ENCODE measurements at regions of chr10 and their contacts with region 1.

Region 1: DNA sequence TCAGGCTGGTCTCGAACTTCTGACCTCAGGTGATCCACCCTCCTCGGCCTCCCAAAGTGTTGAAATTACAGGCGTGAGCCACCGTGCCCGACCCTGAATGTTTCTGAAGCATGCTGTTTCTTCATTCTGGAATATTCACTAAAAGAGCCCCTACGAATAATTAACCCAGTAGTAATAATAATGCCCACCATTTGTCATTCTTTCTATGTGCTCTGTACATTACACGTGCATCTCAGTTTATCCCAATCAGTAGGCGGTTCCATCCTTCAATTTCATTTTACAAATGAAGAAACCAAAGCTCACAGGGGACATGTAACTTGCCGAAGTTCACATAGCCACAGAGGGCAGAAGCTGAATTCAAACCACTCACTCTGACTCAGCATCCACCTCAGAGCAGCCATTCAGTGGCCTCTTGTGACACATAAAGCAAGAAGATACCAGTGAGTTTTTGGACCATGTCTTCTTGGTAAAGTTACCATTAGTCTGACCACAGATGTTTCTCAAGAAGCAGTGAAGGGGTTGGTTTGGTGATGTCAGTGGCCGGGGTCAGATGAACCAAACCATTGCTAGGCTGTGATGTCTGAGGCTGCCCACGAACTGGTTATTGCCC is 71.9 kb upstream of the DUSP5 start:
- DNase-seq: peak; percentile 92
- ATAC-seq: peak; percentile 91
- H3K4me3 Mint-ChIP-seq: peak overlapping the region; percentile 4
- H3K27ac Mint-ChIP-seq: peak overlapping the region; percentile 87
- H3K4me1 Mint-ChIP-seq: peaks cover 91% of the 10 kb centered on the region
- H3K27me3 Mint-ChIP-seq: no peaks in the 10 kb centered on the region

Region 2: GRCh38 chr10:110446954-110447608 is 21.3 kb after region 1 on chr10:
- CTCF ChIA-PET with region 1: interaction called, 17 read pairs
- DNase-seq: peak; percentile 39
- ATAC-seq: no peak
- H3K4me3 Mint-ChIP-seq: no peak overlapping the region
- H3K27ac Mint-ChIP-seq: peak overlapping the region; percentile 63
- H3K4me1 Mint-ChIP-seq: peaks cover 53% of the 10 kb centered on the region
- H3K27me3 Mint-ChIP-seq: no peaks in the 10 kb centered on the region